ENCODE measurements at regions of chr6 and their contacts with region 1.

Region 1: GRCh38 chr6:126804332-126805064 is 314.0 kb upstream of the RSPO3 start:
- DNase-seq: peak; percentile 13
- H3K4me3 Mint-ChIP-seq: no peak overlapping the region
- H3K27ac Mint-ChIP-seq: no peak overlapping the region
- H3K4me1 Mint-ChIP-seq: no peaks in the 10 kb centered on the region
- H3K27me3 Mint-ChIP-seq: no peaks in the 10 kb centered on the region

Region 2: GRCh38 chr6:126890055-126890454 is 85.6 kb after region 1 on chr6:
- CTCF ChIA-PET with region 1: no interaction called
- intact Hi-C with region 1: no loop called
- DNase-seq: no peak
- H3K4me3 Mint-ChIP-seq: no peak overlapping the region
- H3K27ac Mint-ChIP-seq: no peak overlapping the region
- H3K4me1 Mint-ChIP-seq: no peaks in the 10 kb centered on the region
- H3K27me3 Mint-ChIP-seq: no peaks in the 10 kb centered on the region

Region 3: GRCh38 chr6:127069659-127070279 is 265.3 kb after region 1 on chr6:
- CTCF ChIA-PET with region 1: no interaction called
- intact Hi-C with region 1: loop called (anchors 1 kb)
- DNase-seq: no peak
- H3K4me3 Mint-ChIP-seq: no peak overlapping the region
- H3K27ac Mint-ChIP-seq: no peak overlapping the region
- H3K4me1 Mint-ChIP-seq: no peaks in the 10 kb centered on the region
- H3K27me3 Mint-ChIP-seq: peaks cover 6% of the 10 kb centered on the region

Region 4: DNA sequence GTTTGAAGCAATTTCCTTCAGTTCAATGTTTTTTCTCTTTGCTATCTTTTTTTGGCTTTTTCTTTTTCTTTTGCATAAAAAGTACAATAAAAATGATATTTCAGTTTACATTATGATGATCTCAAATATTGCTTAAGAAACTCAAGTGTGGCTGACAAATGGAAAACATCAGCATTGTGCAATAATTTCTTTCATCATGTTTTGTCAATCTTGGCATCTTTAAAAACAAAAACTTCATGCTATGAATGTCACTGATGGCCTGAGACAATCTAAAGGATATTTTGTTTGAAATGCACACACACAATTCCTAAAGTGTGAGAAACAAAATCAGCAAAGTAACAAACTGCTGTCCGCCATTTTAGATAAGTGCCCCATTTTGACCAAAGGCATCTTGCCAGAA is 728.5 kb after region 1 on chr6:
- CTCF ChIA-PET with region 1: no interaction called
- intact Hi-C with region 1: no loop called
- DNase-seq: no peak
- H3K4me3 Mint-ChIP-seq: no peak overlapping the region
- H3K27ac Mint-ChIP-seq: no peak overlapping the region
- H3K4me1 Mint-ChIP-seq: no peaks in the 10 kb centered on the region
- H3K27me3 Mint-ChIP-seq: peaks cover 17% of the 10 kb centered on the region

Region 5: DNA sequence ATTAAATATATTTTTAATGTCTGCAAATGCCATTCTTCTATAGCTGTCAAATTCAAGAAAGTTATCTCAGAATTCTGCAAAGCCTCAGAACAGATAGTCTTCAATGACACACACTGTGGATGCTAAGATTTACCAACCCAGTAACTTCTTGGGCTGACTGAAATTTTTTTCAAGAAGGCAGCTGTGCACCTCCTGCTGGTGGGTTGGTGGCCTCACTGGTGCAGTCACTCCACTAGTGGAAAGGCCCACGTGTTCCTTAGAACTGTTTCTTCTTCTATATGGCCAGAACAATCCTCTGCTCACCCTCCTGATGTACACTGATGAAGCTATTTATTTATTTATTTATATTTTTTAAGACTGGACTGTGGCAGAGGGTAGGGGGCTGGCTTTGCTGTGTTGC is 742.7 kb after region 1 on chr6:
- CTCF ChIA-PET with region 1: no interaction called
- intact Hi-C with region 1: loop called (anchors 10 kb)
- DNase-seq: peak; percentile 49
- H3K4me3 Mint-ChIP-seq: no peak overlapping the region
- H3K27ac Mint-ChIP-seq: no peak overlapping the region
- H3K4me1 Mint-ChIP-seq: peaks cover 2% of the 10 kb centered on the region
- H3K27me3 Mint-ChIP-seq: peaks cover 10% of the 10 kb centered on the region

Measured in activated naive CD4-positive, alpha-beta T cell treated with anti-CD3 and anti-CD28 coated beads for 36 hours (primary cell).